Activated CD4-positive, alpha-beta T cell treated with anti-CD3 and anti-CD28 coated beads for 36 hours (primary cell): ENCODE measurements at regions of chr19 and their contacts with region 1.

Region 1: DNA sequence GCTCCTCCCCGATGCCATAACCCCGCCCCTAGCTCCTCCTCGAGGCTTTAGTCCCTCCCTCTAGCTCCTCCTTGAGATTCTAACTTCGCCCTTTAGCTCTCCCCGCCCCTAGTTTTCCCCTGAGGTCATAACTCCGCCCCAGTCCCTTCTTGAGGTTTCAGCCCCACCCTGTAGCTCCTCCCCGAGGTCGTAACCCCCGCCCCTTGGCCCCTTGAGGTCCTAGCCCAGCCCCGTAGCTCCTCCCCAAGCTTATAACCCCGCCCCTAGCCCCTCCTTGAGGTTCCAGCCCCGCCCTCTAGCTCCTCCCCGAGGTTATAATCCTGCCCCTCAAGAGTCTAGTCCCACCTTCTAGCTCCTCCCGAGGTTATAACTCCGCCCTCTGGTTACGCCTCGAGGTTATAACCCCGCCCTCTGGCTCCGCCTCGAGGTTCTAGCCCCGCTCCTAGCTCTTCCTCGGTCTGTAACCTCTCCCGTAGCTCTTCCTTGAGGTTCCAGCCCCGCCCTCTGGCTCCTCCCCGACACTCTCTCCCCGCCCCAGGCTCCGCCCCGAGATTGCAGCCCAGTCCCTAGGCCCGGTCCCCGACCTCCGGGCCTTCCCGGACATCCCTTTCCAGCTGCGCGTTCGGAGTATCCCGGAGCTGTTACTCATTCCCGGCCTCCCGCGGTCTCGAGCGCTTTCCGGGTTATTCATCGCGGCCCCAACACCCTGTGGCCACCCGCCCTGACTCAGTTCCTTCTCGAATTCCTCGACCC is 1.4 kb downstream of the PLAUR start:
- DNase-seq: peak; percentile 99
- ATAC-seq: peak; percentile 86
- H3K4me3 Mint-ChIP-seq: peak overlapping the region; percentile 85
- H3K27ac Mint-ChIP-seq: peak overlapping the region; percentile 90
- H3K4me1 Mint-ChIP-seq: peaks cover 42% of the 10 kb centered on the region
- H3K27me3 Mint-ChIP-seq: no peaks in the 10 kb centered on the region

Region 2: GRCh38 chr19:43503501-43504425 is 164.8 kb before region 1 on chr19:
- CTCF ChIA-PET with region 1: interaction called, 3 read pairs
- POLR2A ChIA-PET with region 1: no interaction called
- intact Hi-C with region 1: loop called (anchors 1 kb)
- DNase-seq: peak; percentile 100
- ATAC-seq: peak; percentile 96
- H3K4me3 Mint-ChIP-seq: peak overlapping the region; percentile 96
- H3K27ac Mint-ChIP-seq: peak overlapping the region; percentile 94
- H3K4me1 Mint-ChIP-seq: peaks cover 32% of the 10 kb centered on the region
- H3K27me3 Mint-ChIP-seq: no peaks in the 10 kb centered on the region

Region 3: DNA sequence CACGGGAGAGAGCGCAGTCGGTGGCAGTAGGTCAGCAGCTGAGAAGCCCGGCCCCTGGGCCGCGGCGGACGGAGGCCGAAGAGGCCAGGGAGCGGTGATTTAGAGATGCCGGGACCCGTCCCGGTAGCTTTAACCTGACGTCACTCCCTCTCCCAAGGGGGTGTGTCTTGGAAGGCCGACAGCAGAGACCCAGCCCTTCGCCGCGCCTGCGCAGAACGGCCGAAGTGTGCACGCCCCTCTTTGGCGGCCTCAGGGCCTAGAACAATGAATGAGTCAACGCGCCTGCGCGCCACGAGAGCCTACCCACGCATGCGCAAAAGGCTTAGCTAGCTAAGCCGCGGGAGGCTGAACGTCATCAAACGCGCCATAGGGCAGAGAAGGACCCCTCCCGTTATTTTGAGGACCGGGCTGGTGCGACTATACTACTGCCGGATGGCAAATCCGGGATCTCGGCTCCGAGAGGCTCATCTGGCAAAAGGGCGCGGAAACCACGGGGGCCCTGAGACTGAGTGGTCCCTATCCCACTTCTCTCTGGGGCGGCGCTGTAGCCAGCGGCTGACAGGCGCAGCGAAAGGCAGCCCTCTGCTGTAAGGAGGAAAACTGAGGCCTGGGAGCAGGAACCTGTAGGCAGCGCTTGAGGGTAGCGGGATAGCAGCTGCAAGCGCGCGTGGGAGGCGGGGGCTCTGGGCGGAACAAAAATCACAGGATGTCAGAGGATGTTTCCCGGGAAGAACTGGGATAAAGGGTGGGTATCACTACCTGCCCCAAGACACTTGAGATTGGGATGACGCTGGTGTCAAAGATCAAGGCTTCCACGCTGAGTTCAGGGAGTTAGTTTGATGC is 72.4 kb before region 1 on chr19 and contains the starts of genes IRGQ and ZNF576:
- CTCF ChIA-PET with region 1: interaction called, 20 read pairs
- POLR2A ChIA-PET with region 1: interaction called, 6 read pairs
- intact Hi-C with region 1: loop called in 1 of 2 experiments (anchors 1 kb)
- DNase-seq: peak; percentile 100
- ATAC-seq: peak; percentile 83
- H3K4me3 Mint-ChIP-seq: peak within 1 kb of the TSS; percentile 87
- H3K27ac Mint-ChIP-seq: peak within 1 kb of the TSS; percentile 95
- H3K4me1 Mint-ChIP-seq: peaks cover 26% of the 10 kb centered on the region
- H3K27me3 Mint-ChIP-seq: no peaks in the 10 kb centered on the region
- total RNA-seq, gene IRGQ: 11.1 to 16.4 TPM
- total RNA-seq, gene ZNF576: 11.6 to 14.3 TPM

Region 4: DNA sequence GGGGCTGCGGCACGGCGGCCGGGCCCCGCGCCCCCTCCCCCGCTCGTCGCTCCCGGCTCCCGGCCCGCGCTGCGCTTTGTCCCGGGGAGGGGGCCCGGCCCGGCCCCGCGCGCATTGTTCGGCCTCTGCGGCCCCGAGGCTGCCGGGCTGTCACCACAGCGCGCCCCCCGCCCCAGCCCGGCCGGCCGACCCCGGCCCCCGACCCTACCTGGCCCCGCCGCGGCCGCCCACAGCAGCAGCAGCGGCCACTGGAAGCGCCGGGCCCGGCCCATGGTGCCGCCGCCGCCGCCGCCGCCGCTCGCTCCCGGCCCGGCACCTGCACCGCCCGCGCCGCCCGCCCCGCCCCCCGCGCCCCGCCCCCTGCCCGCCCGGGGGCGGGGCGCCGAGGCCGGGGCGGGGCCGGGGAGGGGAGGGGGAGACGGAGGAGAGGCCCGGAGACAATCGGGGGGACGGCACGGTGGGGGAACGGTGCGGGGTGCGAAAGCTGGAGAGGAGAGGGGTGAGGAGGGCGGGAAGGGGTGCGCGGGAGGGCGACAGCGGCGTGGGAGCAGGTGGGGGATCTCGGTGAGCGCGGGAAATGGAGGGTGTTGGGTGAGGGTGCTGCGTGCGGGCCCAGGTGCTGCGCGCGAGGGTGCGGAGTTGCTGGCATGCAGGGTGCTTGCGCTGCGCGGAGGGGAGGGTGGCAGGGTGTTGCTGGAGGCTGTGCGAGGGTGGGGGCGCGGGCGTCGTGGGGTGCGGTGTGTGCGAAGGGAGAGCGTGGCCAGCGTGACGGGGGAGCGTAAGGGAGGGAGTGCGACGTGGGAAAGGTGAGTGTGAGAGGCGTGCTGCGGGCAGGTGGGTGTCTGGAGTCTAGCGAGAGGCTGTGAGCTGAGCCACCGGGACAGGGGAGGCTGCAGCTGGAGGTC is 28.8 kb before region 1 on chr19 and contains the start of gene CADM4:
- CTCF ChIA-PET with region 1: interaction called, 6 read pairs
- POLR2A ChIA-PET with region 1: no interaction called
- intact Hi-C with region 1: loop called in 1 of 2 experiments (anchors 1 kb)
- DNase-seq: peak; percentile 65
- ATAC-seq: peak; percentile 81
- H3K4me3 Mint-ChIP-seq: peak within 1 kb of the TSS; percentile 65
- H3K27ac Mint-ChIP-seq: no peak within 1 kb of the TSS
- H3K4me1 Mint-ChIP-seq: peaks cover 14% of the 10 kb centered on the region
- H3K27me3 Mint-ChIP-seq: peaks cover 26% of the 10 kb centered on the region
- total RNA-seq, gene CADM4: 0.53 to 0.61 TPM

Region 5: DNA sequence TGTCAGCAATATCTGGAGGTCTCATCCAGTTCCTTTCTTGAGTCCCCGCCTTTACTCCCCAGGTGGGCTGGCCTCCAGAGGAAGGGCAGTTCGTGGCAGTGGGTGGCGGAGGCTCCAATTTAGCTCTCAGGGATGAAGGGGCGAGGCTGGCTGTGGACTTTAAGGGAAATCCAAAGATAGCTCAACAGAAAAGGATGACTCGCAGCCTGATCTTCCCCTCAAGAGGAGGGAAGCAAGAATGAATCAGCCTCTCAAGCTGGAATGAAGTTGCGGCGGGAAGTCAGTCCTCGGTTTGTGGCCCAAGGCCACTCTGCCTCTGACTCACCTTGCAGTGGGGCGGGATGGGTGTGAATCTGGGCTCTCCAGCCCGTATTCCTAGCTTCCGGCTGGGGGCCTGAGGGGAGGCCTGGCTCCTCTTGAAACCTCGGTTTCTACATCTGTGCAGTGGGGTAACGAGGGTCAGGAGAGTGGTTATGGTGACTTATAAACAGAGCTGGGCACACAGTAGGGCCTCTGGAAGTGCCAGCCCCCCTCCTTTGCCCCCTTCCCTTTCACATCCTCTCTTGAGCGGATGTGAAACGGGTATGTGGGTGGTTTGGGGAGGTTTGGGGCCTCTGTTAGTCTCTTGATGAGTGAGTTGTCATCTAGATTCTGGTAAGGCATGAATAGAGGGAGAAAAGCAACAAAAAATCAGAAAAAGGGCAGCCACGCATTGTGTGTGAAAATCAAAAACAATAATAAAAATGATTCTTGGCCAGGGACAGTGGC is 96.7 kb after region 1 on chr19:
- CTCF ChIA-PET with region 1: interaction called, 14 read pairs
- POLR2A ChIA-PET with region 1: no interaction called
- intact Hi-C with region 1: loop called in 1 of 2 experiments (anchors 1 kb)
- DNase-seq: peak; percentile 92
- ATAC-seq: peak; percentile 81
- H3K4me3 Mint-ChIP-seq: peak overlapping the region; percentile 47
- H3K27ac Mint-ChIP-seq: peak overlapping the region; percentile 97
- H3K4me1 Mint-ChIP-seq: peaks cover 71% of the 10 kb centered on the region
- H3K27me3 Mint-ChIP-seq: no peaks in the 10 kb centered on the region

Region 6: DNA sequence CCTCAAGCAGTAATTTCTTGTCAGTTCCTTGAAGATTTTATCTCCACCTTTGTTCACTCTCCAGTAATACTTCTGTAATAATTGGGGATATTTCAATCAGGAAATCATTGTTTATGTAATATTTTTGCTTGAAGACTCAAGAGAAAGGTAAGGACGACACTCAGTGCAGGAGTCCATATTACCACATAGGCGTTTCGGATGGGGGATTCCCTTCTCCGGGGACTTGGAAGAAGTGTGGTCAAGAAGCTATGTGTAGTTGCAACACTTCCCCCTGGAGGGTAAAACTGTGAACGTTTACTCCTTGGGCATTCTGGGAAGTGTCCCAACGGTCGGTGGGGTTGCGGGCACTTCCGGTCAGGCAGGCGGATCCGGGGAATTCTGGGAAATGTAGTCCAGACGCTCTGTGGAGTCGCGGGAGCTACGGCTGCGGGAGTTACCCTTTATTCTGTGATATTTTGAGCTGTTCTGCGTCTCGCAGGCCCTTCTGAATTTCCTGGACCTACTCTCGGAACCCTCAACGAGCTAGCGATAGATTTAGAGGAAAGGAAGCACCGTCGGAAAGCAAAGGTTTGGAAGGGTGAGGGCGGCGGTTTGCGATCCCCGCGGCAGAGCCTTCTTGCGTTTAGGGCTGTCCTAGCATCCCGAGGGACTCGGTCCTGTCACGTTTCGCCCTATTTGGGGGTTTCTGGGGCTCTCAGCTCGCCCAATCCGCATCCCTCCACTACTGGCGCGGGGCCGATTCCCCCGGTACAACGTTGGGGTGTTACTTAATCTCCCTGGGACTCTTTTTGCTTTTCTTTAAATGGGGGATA is 282.5 kb after region 1 on chr19 and contains the start of gene ZNF221:
- CTCF ChIA-PET with region 1: no interaction called
- POLR2A ChIA-PET with region 1: no interaction called
- intact Hi-C with region 1: no loop called
- DNase-seq: peak; percentile 84
- ATAC-seq: peak; percentile 95
- H3K4me3 Mint-ChIP-seq: peak within 1 kb of the TSS; percentile 83
- H3K27ac Mint-ChIP-seq: peak within 1 kb of the TSS; percentile 85
- H3K4me1 Mint-ChIP-seq: peaks cover 6% of the 10 kb centered on the region
- H3K27me3 Mint-ChIP-seq: peaks cover 17% of the 10 kb centered on the region
- total RNA-seq, gene ZNF221: 1.8 to 1.9 TPM

Region 7: DNA sequence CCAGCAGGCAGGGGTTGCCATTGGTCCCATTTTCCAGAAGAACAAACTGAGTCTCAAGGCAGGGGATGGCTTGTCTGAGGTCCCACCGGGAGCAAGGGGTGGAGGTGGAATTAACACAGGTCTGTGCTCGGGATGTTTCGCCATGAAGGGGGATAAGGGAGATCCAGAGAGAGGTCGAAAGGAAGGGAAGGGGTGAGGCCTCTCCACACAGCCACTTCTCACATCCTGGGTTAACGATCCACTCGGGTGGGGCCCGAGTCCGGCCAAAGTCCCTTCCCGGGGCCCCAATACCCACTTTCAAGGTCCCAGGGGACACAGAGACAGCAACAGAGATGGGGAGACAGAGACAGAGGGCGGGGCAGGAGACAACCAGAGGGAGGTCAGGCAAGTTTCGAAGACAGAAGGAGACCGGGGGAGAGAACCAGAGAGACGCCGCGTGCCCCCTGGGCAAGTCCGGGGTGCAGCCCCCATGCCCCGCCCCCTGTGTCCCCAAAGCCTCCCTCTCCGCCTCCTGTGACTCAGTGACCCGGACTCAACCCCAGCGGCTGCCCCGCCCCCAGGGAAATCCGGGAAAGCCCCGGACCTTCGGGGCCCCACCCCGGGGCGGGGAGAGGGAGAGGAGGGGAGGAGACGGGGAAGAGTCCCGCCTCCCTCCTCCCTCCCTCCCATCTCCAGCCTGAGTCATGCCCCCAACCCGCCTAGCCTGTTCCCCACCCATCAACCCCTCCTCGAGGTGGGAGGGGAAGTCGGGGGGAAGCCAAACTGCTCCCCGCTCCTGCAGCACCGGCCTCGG is 1078.6 kb after region 1 on chr19:
- CTCF ChIA-PET with region 1: no interaction called
- POLR2A ChIA-PET with region 1: no interaction called
- intact Hi-C with region 1: loop called in 1 of 2 experiments (anchors 2 kb)
- DNase-seq: peak; percentile 98
- ATAC-seq: peak; percentile 85
- H3K4me3 Mint-ChIP-seq: peak overlapping the region; percentile 91
- H3K27ac Mint-ChIP-seq: peak overlapping the region; percentile 95
- H3K4me1 Mint-ChIP-seq: peaks cover 43% of the 10 kb centered on the region
- H3K27me3 Mint-ChIP-seq: no peaks in the 10 kb centered on the region